ENCODE measurements at regions of chr3 and their contacts with region 1.

Region 1: DNA sequence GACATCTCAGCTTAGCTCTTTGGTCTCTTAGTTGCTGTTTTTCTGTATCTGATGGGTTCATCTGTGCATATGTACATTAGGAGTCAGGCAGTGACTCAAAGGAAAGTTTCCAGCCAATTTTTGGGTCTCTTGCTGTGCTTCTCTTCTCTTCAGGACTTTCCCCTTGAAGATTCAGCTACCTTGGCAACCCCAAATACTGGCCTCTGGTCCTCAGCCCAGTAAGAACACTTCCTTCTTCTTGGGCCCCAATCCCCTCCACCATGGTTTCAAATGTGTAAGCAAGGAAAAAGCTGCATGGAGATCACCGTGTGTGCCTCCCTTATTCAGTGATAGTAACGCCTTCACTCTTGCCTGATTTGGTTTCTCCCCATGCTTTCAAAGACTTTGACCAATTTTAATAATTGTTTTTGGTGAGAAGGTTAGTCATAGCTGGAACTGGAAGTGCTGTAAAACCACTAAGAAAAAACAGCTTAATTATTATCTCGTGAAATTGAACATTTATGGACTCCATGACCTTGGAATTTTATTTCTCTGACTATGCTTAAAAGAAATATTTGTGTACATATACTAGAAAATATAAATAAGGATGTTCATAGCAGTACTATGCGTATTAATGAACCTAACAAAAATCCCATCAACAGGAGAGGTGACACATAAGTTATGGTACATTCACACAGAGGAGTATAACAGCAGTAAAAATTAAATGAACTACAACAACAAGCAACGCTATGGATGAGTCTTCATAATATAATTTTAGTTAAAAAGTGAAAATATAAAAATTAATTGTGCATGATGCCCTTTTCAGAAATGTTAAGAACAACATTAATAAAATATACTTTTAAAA is 125.3 kb upstream of the BCL6 start:
- DNase-seq: no peak
- H3K4me3 Mint-ChIP-seq: peak overlapping the region; percentile 49
- H3K27ac Mint-ChIP-seq: peak overlapping the region; percentile 84
- H3K4me1 Mint-ChIP-seq: peaks cover 32% of the 10 kb centered on the region
- H3K27me3 Mint-ChIP-seq: no peaks in the 10 kb centered on the region

Region 2: DNA sequence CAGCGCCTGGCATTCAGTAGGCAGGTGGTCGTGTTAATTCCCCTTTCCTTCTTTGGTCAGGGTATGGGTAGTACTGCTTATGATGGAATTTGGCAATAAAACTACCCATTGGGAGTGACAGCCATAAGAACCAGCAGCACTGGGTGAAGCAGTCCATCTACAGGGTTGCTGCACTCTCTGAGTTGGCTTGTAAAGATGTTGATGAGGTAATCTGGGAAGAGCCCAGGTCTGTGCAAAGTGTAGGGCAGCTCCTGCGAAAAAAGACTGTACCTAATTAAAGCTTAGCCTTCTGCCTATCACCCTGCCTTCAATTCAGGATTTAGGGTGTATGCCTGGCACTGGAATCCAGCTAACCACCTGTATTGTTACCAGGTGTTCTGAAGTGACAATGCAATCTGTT is 1235.0 kb before region 1 on chr3:
- intact Hi-C with region 1: no loop called
- DNase-seq: no peak
- H3K4me3 Mint-ChIP-seq: no peak overlapping the region
- H3K27ac Mint-ChIP-seq: no peak overlapping the region
- H3K4me1 Mint-ChIP-seq: peaks cover under 1% of the 10 kb centered on the region
- H3K27me3 Mint-ChIP-seq: peaks cover 19% of the 10 kb centered on the region

Region 3: DNA sequence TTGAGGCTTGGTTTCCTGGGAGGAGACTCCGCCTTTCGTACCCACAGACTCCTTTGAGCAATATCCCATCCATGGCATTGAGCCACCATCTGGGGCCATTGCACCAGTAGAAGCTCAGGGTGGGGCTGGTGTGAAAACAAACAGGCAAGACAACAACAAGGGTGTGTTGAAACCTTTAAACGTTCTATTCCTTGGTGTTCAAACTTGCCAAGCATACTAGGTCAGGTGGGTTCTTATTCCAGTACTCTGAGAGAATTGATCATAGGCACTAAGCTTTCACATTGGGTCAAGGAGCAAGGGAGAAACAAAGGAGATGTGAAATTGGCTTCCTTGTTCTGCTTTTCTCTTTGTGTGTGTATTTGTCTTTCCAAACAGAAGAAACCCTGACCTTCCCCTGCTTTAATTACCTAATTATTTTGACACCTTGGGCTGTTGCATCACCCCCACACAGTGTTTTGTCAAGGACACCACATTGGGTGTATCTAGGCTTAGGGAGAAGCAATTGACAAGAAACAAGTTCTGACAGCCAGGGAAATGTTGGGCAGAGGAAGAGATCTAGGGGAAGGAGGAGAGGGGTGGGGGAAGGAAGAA is 20.2 kb before region 1 on chr3:
- intact Hi-C with region 1: loop called (anchors 1 kb)
- DNase-seq: no peak
- H3K4me3 Mint-ChIP-seq: no peak overlapping the region
- H3K27ac Mint-ChIP-seq: no peak overlapping the region
- H3K4me1 Mint-ChIP-seq: peaks cover 28% of the 10 kb centered on the region
- H3K27me3 Mint-ChIP-seq: no peaks in the 10 kb centered on the region